ENCODE measurements at regions of chr5 and their contacts with region 1.

Region 1: DNA sequence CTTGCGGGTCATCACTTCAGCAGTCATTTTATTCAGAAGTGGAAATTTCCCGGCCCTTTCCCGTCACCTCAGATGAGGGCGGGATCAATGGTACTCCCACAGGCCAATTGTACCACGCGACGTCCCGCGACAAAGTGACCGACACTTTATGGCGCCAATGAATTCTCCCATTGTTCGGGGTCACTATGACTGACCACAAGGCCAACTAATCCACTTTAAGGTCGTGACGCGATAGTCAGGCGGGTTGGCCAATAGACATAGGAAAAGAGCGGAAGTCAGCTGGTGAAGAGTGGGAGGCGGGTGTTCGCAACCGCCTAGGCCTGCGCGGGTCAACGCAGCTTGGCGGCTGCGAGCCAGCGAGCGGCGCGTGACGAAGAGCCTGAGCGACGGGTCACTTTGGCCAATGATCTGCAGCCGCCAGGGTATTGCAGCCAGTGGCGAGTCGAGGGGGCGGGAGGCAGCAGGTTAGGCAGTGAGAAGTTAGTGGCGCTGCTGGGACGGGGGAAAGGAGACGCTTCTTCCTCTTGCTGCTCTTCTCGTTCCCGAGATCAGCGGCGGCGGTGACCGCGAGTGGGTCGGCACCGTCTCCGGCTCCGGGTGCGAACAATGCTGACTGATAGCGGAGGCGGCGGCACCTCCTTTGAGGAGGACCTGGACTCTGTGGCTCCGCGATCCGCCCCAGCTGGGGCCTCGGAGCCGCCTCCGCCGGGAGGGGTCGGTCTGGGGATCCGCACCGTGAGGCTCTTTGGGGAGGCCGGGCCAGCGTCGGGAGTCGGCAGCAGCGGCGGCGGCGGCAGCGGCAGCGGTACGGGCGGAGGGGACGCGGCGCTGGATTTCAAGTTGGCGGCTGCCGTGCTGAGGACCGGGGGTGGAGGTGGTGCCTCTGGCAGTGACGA is at the start of gene ANKHD1:
- DNase-seq: peak; percentile 99
- ATAC-seq: peak; percentile 95
- total RNA-seq, gene ANKHD1: 57.2 TPM

Region 2: DNA sequence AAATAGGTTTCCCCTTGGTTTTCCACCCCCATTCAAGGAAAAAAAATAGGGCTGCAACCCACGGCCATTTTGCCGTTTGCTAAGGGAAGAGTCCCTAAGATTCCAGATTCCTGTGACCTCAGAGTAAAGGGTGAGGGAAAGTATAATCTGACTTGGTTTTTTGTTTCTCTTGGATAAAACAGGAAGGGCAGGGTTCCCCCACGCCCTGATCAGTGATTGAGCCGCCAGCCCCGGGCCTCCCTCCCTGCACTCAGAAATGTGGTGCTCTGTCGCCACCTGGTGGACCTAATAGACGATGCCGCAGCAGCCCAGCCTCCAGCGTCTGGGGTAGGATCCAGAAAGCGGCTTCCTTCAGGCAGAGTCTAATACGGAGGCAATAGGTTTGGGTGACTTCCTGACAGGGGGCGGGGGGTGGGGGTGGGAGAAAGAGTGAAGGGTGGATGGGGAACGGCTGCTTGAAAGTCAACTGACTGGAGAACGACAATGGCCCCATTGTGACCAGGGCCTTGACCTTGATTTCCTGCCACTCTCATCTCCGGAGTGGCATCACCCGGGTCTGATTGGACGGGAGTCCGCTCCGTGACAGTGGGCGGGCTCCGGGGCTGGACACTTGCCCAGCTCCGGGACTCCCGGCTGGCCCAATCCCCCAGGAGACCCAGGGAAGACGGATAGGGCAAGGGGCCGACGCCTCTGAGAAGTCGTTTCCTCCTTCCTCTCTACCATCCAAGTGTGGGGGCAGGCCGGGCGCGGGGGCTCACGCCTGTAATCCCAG is 244.4 kb before region 1 on chr5:
- intact Hi-C with region 1: no loop called
- DNase-seq: peak; percentile 96
- ATAC-seq: peak; percentile 96

Region 3: DNA sequence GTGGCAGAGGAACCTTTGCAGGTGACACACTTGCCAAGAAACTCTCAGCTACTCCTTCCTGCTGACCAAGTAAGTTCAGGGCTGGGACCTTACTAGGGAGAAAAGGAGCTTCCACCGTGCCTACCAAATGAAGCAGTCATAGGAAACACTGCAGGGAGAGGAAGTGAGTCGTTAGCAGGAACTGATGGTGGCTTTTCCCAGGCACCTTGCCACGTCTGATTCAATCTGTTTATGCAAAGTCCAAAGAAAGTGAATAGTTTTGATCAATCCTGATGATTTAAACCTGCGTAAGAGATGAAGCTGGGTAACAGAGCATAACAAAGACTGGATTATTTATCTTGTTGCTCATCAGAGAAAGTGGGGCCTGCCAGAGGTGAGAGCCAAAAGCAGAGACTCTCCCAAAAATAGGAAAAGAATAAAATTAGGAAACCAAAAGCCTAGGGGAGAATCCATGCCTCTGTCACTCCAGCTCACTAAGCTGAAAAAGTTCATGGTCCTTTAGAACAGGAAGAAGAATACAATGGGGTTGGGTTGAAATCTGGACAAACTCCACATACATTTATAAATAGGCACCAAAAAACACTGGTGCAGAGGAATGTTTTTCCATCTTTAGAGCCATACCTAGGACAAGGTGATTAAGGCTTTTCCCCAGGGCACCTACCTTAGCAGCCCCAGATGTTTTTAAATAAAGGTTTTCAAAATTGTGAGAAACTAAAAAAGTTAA is 89.4 kb before region 1 on chr5:
- intact Hi-C with region 1: no loop called
- DNase-seq: no peak
- ATAC-seq: no peak

Region 4: GRCh38 chr5:140564196-140565023 is 162.8 kb after region 1 on chr5 and contains the starts of genes APBB3 and SLC35A4:
- intact Hi-C with region 1: loop called (anchors 2 kb)
- DNase-seq: peak; percentile 98
- ATAC-seq: peak; percentile 96
- total RNA-seq, gene APBB3: 10.6 TPM
- total RNA-seq, gene SLC35A4: 76.4 TPM

Region 5: GRCh38 chr5:140639148-140639979 is 237.8 kb after region 1 on chr5 and contains the start of gene TMCO6:
- intact Hi-C with region 1: loop called (anchors 5 kb)
- DNase-seq: peak; percentile 99
- ATAC-seq: peak; percentile 99
- total RNA-seq, gene TMCO6: 4.2 TPM

Region 6: GRCh38 chr5:140690941-140691924 is 289.6 kb after region 1 on chr5 and contains the starts of genes HARS1 and HARS2:
- intact Hi-C with region 1: loop called (anchors 5 kb)
- DNase-seq: peak; percentile 93
- ATAC-seq: peak; percentile 98
- total RNA-seq, gene HARS1: 35.9 TPM
- total RNA-seq, gene HARS2: 24.4 TPM

Measured in Right ventricle myocardium inferior (tissue), 1 donor.